HepG2 (cell line): ENCODE measurements at regions of chr1 and their contacts with region 1.

Region 1: GRCh38 chr1:36257375-36257767 is 33.1 kb downstream of the THRAP3 start:
- DNase-seq: peak; percentile 27
- ATAC-seq: peak; percentile 70
- H3K4me3 ChIP-seq: no peak overlapping the region
- H3K27ac ChIP-seq: peak overlapping the region; percentile 9
- H3K4me1 ChIP-seq: peaks cover 61% of the 10 kb centered on the region
- H3K27me3 ChIP-seq: no peaks in the 10 kb centered on the region
- CTCF ChIP-seq: no peak
- EP300 ChIP-seq: no peak
- POLR2A ChIP-seq: no peak
- RAD21 ChIP-seq: no peak

Region 2: DNA sequence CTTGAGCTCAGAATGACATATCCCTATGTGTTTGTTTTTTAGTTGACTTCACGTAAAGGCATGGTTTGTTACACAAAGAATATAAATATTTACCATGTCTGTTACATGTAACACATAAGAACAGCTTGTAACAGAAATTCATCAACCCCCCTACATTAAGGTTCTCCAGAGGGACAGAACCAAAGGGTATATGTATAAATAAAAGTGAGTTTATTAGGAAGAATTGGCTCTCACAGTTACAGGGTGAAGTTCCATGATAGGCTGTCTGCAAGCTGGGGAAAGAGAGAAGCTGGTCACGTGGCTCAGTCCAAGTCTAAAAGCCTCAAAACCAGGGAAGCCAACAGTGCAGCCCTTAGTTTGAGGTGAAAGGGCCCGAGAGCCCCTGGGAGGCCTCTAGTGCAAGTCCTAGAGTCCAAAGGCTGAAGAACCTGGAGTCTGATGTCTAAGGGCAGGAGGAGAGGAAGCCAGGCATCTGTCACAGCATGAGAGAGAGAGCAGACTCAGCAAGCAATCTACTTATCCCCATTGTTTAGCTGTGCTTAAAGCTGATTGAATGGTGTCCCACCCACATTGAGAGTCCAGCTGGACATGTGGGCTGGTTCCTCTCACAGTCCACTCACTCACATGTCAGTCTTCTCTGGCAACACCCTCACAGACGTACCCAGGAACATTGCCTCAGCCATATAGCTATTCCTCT is 17.3 kb before region 1 on chr1:
- CTCF ChIA-PET with region 1: no interaction called
- POLR2A ChIA-PET with region 1: interaction called, 7 read pairs
- in situ Hi-C with region 1: no loop called
- intact Hi-C with region 1: loop called (anchors 2 kb)
- DNase-seq: peak; percentile 93
- ATAC-seq: peak; percentile 96
- H3K4me3 ChIP-seq: peak overlapping the region in 2 of 3 experiments; percentile 26 to 29; a peak in 3 of 6 replicates
- H3K27ac ChIP-seq: peak overlapping the region; percentile 89
- H3K4me1 ChIP-seq: peaks cover 94% of the 10 kb centered on the region
- H3K27me3 ChIP-seq: no peaks in the 10 kb centered on the region
- CTCF ChIP-seq: no peak
- EP300 ChIP-seq: peak in 1 of 2 experiments; percentile 72; a peak in 2 of 4 replicates
- POLR2A ChIP-seq: peak; percentile 34 to 65; a peak in 2 of 4 replicates
- RAD21 ChIP-seq: peak; percentile 21; the same call in 1 of the 2 replicates